Aorta (tissue), 5 donors: ENCODE measurements at regions of chr9 and their contacts with region 1.

Region 1: DNA sequence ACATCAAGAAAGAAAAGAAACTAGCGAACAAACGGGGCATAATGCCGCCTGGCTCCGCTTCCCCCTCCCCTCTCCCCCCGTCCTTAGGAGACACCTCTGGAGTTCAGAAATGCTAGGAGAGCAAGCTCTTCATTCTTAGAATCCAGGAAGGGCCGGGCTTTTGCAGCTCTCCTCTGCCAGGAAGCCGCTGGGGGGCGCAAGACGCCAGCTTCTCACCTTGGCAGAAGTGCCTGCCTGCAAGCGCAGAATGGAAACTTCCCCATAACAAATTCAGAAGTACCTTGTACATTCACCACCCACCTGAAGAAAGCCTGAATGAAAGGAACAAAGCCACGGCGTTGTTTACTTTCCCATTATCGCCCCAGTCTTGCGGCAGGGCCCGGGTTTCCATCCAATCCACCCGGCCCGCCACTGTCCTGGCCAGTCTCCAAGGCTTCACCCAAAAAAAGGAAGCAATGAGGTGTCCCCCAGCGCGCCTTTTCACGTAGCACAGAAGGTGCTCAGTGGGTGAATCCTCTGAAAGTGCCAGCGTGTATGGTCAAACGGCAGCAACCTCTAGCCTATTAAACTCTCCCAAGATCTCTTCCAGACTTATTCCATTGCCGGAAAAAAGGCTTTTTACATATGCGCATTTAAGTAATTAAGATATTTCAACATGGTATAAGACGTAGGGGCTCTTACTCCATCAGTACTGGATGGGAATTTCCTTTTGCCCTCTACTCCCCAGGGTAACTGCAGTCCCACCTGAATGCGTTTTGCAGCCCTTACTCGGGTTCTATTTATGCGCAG is 1.6 kb upstream of the GADD45G start:
- DNase-seq: peak; percentile 93 to 96
- ATAC-seq: peak; percentile 58
- H3K4me3 ChIP-seq: peak overlapping the region in 1 of 2 donors; percentile 6
- H3K27ac ChIP-seq: no peak overlapping the region
- H3K4me1 ChIP-seq: peaks cover 0 to 2% of the 10 kb centered on the region in 2 donors
- H3K27me3 ChIP-seq: no peaks in the 10 kb centered on the region

Region 2: DNA sequence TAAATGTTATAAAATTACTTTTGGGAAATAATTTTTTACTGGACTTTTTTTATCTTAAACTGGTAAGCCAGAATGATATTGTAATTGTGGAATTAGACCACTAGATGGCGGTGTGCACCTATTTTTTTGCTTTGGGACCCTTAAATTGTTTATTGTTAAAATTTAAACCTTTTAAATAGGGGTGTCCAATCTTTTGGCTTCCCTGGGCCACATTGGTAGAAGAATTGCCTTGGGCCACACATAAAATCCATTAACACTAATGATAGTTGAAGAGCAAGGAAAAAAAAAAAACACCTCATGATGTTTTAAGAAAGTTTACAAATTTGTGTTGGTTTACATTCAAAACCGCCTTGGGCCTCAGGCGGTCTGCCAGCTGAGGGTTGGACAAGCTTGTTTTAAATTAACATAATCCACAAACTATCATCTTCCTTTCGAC is 26.8 kb before region 1 on chr9:
- intact Hi-C with region 1: no loop called
- DNase-seq: peak in 1 of 2 donors; percentile 49
- ATAC-seq: no peak
- H3K4me3 ChIP-seq: no peak overlapping the region
- H3K27ac ChIP-seq: no peak overlapping the region
- H3K4me1 ChIP-seq: no peaks in the 10 kb centered on the region
- H3K27me3 ChIP-seq: no peaks in the 10 kb centered on the region

Region 3: DNA sequence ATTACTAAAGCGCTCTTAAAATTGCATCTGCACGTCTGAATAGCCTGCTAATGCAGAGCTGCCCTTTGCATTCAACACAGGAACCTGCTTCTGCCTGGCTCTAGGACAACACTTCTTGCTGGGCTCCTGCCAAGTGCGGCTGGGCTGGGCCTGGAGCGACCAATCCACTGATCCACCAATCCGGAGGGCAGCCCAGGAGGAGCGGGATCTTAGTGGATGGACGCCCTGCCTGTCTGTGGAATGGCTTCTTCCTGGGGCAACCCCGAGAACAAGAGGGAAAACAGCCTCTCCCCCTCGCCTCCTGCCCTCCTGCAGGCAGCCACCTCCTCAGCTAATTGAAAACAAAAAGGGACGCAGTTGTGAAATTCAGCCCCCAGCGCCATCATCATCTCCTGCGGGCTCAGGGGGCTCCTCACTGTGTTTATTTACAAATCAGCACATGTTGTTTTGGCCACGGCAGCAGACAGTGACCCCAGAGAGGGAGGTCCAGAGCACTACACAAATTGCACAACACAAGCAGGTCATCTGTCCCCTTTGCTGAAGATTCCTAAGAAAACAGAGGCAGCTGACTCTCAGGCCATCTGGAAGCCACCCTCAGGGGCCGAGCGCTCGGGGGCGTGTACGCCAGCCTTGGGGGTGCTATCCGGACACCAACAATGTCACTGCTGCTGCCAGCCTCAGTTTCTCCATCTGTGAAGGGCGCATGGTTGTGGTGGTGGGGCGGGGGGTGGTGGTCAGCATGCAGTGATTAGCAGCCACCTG is 59.0 kb after region 1 on chr9:
- intact Hi-C with region 1: loop called in 1 of 2 experiments (anchors 2 kb)
- DNase-seq: peak; percentile 98
- ATAC-seq: peak; percentile 94
- H3K4me3 ChIP-seq: peak overlapping the region in 1 of 2 donors; percentile 46
- H3K27ac ChIP-seq: no peak overlapping the region
- H3K4me1 ChIP-seq: no peaks in the 10 kb centered on the region
- H3K27me3 ChIP-seq: no peaks in the 10 kb centered on the region

Region 4: DNA sequence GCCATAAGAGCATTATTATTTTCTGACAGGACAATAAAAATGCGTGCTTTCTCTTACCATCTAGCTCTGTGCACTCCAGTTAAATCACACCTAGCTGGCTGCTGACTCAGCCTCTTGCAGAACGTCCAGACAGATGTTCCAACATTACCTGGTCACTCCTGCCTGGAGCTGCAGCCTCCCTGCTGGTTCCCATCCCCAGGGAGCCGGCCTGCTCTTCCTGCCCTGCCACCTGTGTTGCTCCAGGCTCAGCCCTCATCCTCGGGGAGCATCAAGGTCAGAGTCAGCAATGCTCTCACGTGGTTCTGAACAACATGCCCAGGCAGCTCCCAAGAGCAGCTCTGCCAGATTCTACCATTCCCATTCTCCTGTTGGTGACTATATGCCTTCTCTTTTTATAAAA is 82.9 kb after region 1 on chr9:
- intact Hi-C with region 1: loop called in 1 of 2 experiments (anchors 5 kb)
- DNase-seq: peak in 1 of 2 donors; percentile 38
- ATAC-seq: no peak
- H3K4me3 ChIP-seq: no peak overlapping the region
- H3K27ac ChIP-seq: no peak overlapping the region
- H3K4me1 ChIP-seq: peaks cover 0 to 2% of the 10 kb centered on the region in 2 donors
- H3K27me3 ChIP-seq: no peaks in the 10 kb centered on the region

Region 5: DNA sequence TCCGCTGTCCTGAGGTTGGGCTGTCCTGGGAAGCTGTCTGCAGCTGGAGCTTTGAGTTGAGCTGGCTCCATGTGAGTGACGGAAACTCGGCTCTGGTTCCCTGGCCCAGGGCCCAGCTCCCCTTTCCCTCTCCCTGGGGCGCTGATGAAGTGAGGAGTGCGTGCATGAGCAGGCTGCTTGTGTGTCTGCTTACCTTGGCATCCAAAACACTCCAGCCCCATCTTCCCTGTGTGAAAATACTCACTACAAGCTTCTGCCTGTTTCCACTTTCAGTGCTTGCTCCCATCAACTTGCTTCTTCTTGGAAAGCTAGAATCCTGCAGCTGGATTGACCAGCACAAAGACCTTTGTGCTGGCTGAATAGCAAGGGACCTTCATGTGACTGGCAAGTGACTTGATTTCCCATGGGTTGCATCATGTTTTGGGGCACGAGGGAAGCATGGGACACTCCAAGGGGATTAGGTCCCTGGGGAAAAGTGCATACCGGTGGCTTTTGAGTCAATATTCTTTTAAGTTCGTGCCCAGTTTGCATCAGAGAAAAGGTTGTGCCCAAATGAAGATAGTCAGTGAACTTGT is 199.7 kb after region 1 on chr9:
- intact Hi-C with region 1: loop called in 1 of 2 experiments (anchors 5 kb)
- DNase-seq: peak in 1 of 2 donors; percentile 50
- ATAC-seq: peak; percentile 42
- H3K4me3 ChIP-seq: no peak overlapping the region
- H3K27ac ChIP-seq: no peak overlapping the region
- H3K4me1 ChIP-seq: no peaks in the 10 kb centered on the region
- H3K27me3 ChIP-seq: no peaks in the 10 kb centered on the region

Region 6: DNA sequence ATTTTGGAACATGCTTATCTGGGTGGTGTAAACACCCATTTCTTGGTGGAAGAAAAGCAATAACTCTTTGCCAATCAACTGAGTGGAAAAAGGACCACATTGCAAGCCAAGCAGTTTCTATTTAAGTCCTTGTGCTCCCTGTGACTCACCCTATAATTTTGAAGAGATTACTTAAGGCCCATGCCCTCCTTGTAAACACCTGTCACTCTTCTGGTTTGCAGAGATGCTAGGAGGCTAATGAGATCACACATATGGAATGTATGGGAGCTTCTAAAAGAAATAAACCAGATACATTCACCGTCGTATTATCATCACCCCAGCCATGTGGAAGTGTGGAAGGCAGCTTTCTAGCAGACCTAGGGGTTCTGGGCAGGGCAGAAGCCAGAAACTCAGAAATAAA is 338.7 kb after region 1 on chr9:
- intact Hi-C with region 1: no loop called
- DNase-seq: no peak
- ATAC-seq: peak; percentile 82
- H3K4me3 ChIP-seq: no peak overlapping the region
- H3K27ac ChIP-seq: peak overlapping the region in 1 of 2 donors; percentile 78
- H3K4me1 ChIP-seq: no peaks in the 10 kb centered on the region
- H3K27me3 ChIP-seq: no peaks in the 10 kb centered on the region

Region 7: DNA sequence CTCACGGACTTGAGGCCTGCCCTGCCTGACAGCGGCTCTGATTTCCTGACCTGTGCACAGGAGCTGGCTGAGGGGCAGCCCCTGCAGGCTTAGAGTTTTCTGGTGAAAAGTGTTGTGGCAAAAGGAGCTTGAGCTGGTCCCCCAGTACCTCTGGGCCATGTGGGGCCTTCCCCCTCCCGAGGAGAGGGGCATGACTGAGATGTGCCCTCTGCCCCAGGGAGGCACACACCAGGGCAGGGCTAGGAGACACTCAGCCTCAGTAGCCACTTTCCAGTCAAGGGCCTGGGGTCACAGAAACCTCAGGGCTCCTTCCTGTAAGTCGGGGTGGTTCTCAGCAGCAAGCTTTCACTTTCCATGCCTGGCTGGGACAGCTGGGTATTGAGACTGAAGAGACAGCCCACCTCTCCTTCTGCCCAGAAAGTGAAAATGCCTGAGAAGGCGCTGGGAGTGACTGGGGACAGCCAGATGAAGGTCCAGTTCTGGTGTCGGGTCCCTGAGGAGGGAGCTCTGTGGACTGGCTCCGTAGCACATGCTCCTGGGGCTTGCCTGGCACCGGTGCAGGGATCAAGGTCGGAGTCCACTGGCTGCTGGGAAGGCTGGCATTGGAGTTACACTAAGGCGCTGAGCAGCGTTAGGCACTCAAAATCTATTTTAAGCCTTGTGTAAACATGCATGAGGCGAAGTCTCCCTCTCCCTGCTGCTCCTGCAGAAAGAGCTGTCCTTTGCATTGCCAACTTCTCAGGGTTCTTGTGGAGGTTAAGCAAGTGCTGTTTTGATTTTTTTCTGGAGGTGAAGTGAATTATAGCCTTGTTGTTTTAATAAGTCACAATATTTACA is 396.6 kb after region 1 on chr9:
- intact Hi-C with region 1: loop called (anchors 2 to 10 kb)
- DNase-seq: peak; percentile 87 to 89
- ATAC-seq: peak; percentile 84
- H3K4me3 ChIP-seq: no peak overlapping the region
- H3K27ac ChIP-seq: peak overlapping the region in 1 of 2 donors; percentile 83
- H3K4me1 ChIP-seq: peaks cover 8 to 10% of the 10 kb centered on the region in 2 donors
- H3K27me3 ChIP-seq: no peaks in the 10 kb centered on the region

Region 8: DNA sequence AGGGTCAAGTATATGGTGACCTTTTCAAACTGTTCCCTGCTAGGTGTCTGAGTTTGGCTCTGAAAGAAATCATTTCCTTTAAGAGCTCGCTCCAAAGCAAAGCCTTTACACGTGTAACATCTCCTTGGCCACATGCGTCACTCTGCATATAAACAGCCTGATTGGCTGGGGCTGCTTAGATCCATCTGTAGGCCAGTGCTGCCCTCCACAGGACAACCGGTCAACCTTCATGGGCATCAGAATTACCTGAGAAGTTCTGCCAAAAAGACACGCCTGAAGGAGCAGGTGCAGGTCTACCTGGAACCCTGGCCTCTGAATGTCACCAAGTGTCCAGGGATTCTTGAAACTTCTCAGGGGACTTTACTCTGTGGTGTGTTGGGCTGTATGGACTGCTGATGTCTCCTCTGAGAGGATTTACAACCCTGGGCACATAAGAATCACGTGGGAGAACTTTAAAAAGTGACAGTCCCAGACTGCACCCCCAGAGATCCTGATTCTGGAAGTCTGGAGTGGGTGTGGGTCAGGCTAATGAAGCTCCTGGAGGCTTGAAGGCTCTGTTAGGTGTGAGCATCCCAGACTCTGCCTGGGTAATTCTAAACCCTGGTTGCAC is 499.2 kb after region 1 on chr9:
- intact Hi-C with region 1: loop called (anchors 1 to 2 kb)
- DNase-seq: peak; percentile 87 to 89
- ATAC-seq: peak; percentile 89
- H3K4me3 ChIP-seq: no peak overlapping the region
- H3K27ac ChIP-seq: no peak overlapping the region
- H3K4me1 ChIP-seq: no peaks in the 10 kb centered on the region
- H3K27me3 ChIP-seq: no peaks in the 10 kb centered on the region

Region 9: GRCh38 chr9:90870621-90871326 is 1267.6 kb after region 1 on chr9:
- intact Hi-C with region 1: loop called (anchors 5 kb)
- DNase-seq: no peak
- ATAC-seq: no peak
- H3K4me3 ChIP-seq: no peak overlapping the region
- H3K27ac ChIP-seq: no peak overlapping the region
- H3K4me1 ChIP-seq: no peaks in the 10 kb centered on the region
- H3K27me3 ChIP-seq: no peaks in the 10 kb centered on the region